ENCODE measurements at regions of chr2 and their contacts with region 1.

Region 1: GRCh38 chr2:237603718-237604362 is 13.3 kb upstream of the RAB17 start:
- DNase-seq: no peak
- ATAC-seq: peak; percentile 28
- H3K4me3 Mint-ChIP-seq: no peak overlapping the region
- H3K27ac Mint-ChIP-seq: peak overlapping the region; percentile 64
- H3K4me1 Mint-ChIP-seq: peaks cover 50% of the 10 kb centered on the region
- H3K27me3 Mint-ChIP-seq: peaks cover 12% of the 10 kb centered on the region
- CTCF ChIP-seq: no peak

Region 2: DNA sequence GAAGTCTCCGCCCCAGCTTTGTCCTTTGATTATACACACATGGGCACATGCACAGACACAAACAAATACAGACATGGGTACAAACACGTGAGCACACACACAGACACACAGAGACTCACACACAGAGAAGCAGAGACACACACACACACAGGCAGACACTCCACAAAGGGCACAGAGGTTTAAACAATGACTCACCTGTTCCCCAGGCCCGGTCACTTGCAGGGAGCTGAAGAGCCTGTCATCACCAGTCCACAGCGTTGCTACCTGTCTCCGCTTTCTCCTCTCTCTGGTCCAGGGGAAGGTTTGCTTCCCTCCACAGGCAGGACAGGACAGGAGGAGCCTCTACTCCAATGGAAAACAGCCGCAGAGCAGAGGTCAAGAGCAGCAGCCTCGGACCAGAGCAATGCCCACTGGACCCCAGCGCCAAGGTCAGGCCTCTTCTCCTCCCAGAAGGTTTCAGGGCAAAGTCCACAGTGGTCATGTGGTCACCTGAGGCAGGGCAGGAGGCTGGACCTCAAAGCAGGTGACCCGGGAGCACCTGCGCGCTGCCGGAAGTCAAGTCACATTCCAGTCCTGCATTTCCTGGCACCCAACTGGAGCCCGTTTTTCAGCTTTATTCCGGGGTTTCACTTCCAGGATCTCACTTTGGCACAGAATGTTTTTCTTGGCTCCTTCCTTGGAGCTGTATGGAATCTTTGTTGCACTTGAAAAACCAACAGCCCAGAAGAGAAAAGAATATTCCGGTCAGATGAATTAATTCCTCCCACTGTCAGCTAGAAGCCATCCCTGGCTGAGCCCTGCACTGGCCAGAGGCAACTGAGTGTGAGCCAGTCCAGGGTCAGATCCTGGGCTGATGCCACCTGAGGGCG is 13.3 kb before region 1 on chr2 and contains the start of gene RAB17:
- CTCF ChIA-PET with region 1: interaction called, 37 read pairs
- POLR2A ChIA-PET with region 1: interaction called, 4 read pairs
- DNase-seq: peak; percentile 51
- ATAC-seq: peak; percentile 69
- H3K4me3 Mint-ChIP-seq: peak within 1 kb of the TSS; percentile 83
- H3K27ac Mint-ChIP-seq: peak within 1 kb of the TSS; percentile 76
- H3K4me1 Mint-ChIP-seq: peaks cover 88% of the 10 kb centered on the region
- H3K27me3 Mint-ChIP-seq: no peaks in the 10 kb centered on the region
- CTCF ChIP-seq: no peak
- total RNA-seq, gene RAB17: 134 to 140 TPM (median 137 TPM) in 3 replicates

Region 3: DNA sequence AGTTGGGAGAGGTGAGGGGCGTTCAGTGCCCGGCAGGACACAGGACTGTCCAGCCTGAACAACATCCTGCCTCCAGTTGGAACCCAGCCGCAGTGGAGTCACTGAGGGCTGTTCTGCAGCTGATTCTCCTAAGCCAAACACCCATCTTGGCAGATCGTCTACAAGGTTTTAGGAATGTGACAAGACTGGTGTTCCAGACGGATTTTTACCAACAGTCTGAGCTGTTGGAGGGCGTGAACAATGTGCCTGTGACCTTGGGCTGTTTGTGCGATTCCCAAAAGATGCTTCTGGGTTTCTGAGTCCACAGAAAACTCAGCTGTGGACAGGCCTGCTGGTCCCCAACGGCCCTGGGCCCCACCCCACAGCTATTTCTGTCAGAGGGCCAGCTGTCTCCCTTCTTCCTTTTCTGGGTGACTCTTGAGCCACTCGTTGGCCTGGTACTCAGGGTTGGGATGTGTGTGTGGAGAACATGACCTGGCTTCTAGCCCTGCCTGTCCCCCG is 29.3 kb after region 1 on chr2:
- CTCF ChIA-PET with region 1: no interaction called
- POLR2A ChIA-PET with region 1: no interaction called
- DNase-seq: no peak
- ATAC-seq: no peak
- H3K4me3 Mint-ChIP-seq: no peak overlapping the region
- H3K27ac Mint-ChIP-seq: no peak overlapping the region; the same call in 1 of the 2 replicates
- H3K4me1 Mint-ChIP-seq: peaks cover 26% of the 10 kb centered on the region
- H3K27me3 Mint-ChIP-seq: peaks cover 11% of the 10 kb centered on the region
- CTCF ChIP-seq: no peak

Measured in WTC11 (cell line).